Activated B cell treated with CpG ODN at 0.5 μM for 24 hours (primary cell): ENCODE measurements at regions of chr17 and their contacts with region 1.

Region 1: GRCh38 chr17:40062329-40063186 is at the start of gene THRA:
- DNase-seq: peak; percentile 79
- ATAC-seq: peak; percentile 93
- H3K4me3 Mint-ChIP-seq: peak within 1 kb of the TSS; percentile 87
- H3K27ac Mint-ChIP-seq: peak within 1 kb of the TSS; percentile 78
- H3K4me1 Mint-ChIP-seq: peaks cover 39% of the 10 kb centered on the region
- H3K27me3 Mint-ChIP-seq: peaks cover under 1% of the 10 kb centered on the region
- CTCF ChIP-seq: no peak
- total RNA-seq, gene THRA: 5.4 and 5.9 TPM in 2 replicates

Region 2: DNA sequence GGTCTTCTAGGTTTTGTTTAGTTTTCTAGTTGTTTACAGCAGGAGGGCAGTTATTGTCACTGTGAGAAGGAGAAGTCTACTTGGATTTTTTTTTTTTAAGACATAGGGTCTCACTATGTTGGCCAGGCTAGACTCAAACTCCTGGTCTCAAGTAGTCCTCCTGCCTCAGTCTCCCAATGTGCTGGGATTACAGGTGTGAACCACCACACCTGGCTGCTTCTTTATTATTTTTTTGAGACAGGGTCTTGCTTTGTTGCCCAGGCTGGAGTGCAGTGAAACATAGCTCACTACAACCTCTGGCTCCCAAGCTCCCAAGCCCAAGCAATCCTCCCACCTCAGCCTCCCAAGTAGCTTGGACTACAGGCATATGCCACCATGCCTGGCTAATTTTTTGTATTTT is 768.5 kb before region 1 on chr17:
- CTCF ChIA-PET with region 1: no interaction called
- POLR2A ChIA-PET with region 1: no interaction called
- intact Hi-C with region 1: no loop called
- DNase-seq: no peak
- ATAC-seq: no peak
- H3K4me3 Mint-ChIP-seq: no peak overlapping the region
- H3K27ac Mint-ChIP-seq: no peak overlapping the region
- H3K4me1 Mint-ChIP-seq: no peaks in the 10 kb centered on the region
- H3K27me3 Mint-ChIP-seq: no peaks in the 10 kb centered on the region
- CTCF ChIP-seq: no peak

Region 3: GRCh38 chr17:40075201-40075941 is 12.8 kb after region 1 on chr17:
- CTCF ChIA-PET with region 1: interaction called, 37 read pairs
- POLR2A ChIA-PET with region 1: interaction called, 18 read pairs
- intact Hi-C with region 1: loop called (anchors 1 kb)
- DNase-seq: peak; percentile 52
- ATAC-seq: peak; percentile 96
- H3K4me3 Mint-ChIP-seq: no peak overlapping the region
- H3K27ac Mint-ChIP-seq: peak overlapping the region; percentile 16
- H3K4me1 Mint-ChIP-seq: peaks cover 29% of the 10 kb centered on the region
- H3K27me3 Mint-ChIP-seq: no peaks in the 10 kb centered on the region
- CTCF ChIP-seq: peak; percentile 61